Activated T-helper 2 cell treated with anti-CD3 and anti-CD28 coated beads, Interferon-gamma antibody, Interleukin-2, Interleukin-4, amounts not matched to agents 10 μg/mL and 5 μg/mL and 100 μg/mL, durations not matched to agents 14 hours and 24 hours and 36 hours (primary cell): ENCODE measurements at regions of chr9 and their contacts with region 1.

Region 1: DNA sequence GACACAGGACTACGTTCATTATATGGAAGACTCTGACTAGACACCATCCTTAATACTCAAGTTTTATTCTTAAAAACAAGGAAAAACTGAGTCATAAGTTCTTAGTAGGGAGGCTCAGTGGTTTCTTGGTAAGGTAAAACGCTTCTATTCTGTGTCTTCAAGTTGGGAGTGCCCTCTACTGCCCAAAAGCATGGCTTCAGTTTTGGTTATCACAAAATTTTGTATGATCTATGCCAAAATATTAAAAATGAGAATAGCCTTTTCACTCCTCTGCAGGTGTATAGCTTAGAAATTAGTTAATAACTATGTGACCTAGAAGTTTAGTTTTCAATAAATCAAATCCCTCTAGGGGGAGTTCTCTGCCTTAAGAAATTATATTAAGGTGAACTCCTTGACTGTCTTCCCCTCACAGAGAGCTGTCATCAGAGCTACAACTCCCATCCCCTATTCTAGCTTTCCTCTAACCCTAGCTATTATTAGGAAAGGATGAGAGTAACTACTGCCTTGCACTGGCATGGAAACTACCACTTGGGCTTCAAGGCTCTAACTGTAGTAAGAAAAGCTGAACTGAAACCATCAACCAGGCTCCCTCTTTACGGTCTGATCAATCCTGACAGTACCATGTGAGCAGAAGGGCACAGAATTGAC is 189.7 kb downstream of the GNAQ start:
- DNase-seq: no peak
- H3K4me3 Mint-ChIP-seq: no peak overlapping the region
- H3K27ac Mint-ChIP-seq: peak overlapping the region; percentile 42
- H3K4me1 Mint-ChIP-seq: peaks cover 37% of the 10 kb centered on the region
- H3K27me3 Mint-ChIP-seq: no peaks in the 10 kb centered on the region

Region 2: DNA sequence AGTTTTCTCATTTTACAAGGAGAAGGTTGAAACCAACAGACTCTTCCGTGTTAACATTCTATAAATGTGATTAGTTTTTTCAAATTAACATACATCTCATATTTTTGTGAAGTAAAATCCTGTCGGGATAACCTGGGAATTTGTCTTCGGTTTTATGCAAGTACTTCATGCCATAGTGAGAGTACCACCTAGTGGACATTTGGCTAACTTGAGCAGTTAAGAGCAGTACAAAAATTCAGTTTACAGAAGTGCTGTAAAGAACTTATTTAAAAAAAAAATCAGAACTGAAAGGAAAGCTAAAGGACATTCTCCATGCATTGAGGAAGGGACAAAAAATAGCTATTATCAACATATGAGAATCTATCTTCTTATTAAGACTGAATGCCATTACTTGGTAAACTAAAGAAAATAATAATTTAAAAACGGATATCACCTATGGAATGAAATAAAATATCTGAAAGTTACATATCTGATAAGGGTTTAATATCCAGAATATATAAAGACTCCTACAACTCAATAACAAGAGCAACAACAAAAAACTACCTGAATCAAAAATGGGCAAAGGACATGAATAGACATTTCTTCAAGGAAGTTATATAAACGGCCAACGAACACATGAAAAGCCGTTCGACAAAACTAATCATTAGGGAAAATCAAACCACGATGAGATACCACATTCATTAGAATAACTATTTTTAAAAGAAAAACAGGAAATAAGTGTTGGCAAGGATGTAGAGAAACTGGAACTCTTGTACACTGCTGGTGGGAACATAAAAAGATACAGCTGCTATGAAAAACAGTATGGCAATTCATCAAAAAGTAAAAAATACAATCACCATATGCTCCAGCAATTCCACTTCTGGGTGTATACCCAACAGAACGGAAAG is 76.7 kb before region 1 on chr9:
- intact Hi-C with region 1: no loop called
- DNase-seq: no peak
- H3K4me3 Mint-ChIP-seq: no peak overlapping the region
- H3K27ac Mint-ChIP-seq: no peak overlapping the region
- H3K4me1 Mint-ChIP-seq: peaks cover 6% of the 10 kb centered on the region
- H3K27me3 Mint-ChIP-seq: no peaks in the 10 kb centered on the region

Region 3: GRCh38 chr9:77884395-77884851 is 42.6 kb after region 1 on chr9:
- intact Hi-C with region 1: no loop called
- DNase-seq: no peak
- H3K4me3 Mint-ChIP-seq: no peak overlapping the region
- H3K27ac Mint-ChIP-seq: peak overlapping the region; percentile 52
- H3K4me1 Mint-ChIP-seq: peaks cover 39% of the 10 kb centered on the region
- H3K27me3 Mint-ChIP-seq: no peaks in the 10 kb centered on the region

Region 4: GRCh38 chr9:77899679-77900354 is 58.0 kb after region 1 on chr9:
- intact Hi-C with region 1: loop called (anchors 10 kb)
- DNase-seq: no peak
- H3K4me3 Mint-ChIP-seq: no peak overlapping the region
- H3K27ac Mint-ChIP-seq: no peak overlapping the region
- H3K4me1 Mint-ChIP-seq: peaks cover 61% of the 10 kb centered on the region
- H3K27me3 Mint-ChIP-seq: no peaks in the 10 kb centered on the region